ENCODE measurements at regions of chr19 and their contacts with region 1.

Region 1: GRCh38 chr19:13212759-13213330 is 62.6 kb downstream of the IER2 start:
- DNase-seq: peak; percentile 62 to 73 (median 66)
- H3K4me3 ChIP-seq: no peak overlapping the region
- H3K4me3 Mint-ChIP-seq: peak overlapping the region in 3 of 8 donors; percentile 43 to 79 (median 44)
- H3K27ac ChIP-seq: no peak overlapping the region
- H3K27ac Mint-ChIP-seq: peak overlapping the region in 5 of 7 donors; percentile 4 to 75 (median 25)
- H3K4me1 ChIP-seq: peaks cover 14% of the 10 kb centered on the region
- H3K4me1 Mint-ChIP-seq: peaks cover 17 to 50% (median 29%) of the 10 kb centered on the region in 4 donors
- H3K27me3 ChIP-seq: no peaks in the 10 kb centered on the region
- H3K27me3 Mint-ChIP-seq: no peaks in the 10 kb centered on the region

Region 2: DNA sequence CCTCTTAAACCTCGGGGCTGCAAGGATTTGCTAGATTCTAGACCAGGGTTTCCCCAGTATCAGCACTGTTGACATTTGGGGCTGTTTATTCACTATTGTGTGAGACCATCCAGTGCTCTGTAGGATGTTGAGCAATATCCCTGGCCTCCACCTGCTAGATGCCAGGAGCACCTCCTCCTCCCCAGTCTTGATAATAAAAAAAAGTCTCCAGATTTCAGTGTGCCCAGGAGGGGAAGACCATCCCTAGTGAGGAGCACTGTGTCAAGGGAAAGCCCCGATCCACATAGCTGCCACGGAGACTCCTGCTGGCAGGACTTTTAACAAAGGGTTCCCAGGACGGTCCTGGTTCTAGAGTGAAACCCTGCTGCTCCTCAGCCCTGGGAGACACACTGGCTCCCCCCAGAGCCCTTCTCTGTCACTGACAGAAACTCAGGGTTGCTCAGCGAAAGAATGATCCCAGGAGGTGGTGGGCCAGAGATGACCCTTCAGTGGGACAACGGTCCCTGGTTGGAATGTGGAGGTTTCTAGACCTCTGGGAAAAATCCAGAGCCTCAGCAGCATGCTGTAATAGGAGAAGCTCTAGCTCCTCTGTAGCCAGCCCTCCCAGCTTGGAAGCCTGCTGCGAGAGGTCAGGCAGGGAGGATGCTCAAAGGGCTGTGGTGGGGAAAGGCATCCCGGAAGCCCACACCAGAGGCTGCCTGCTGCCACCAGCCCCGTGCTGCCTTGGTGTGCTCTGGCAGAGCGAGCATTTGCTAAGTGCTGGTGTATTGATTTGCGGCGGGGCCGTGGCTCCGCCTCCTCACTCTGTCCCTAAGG is 130.4 kb before region 1 on chr19:
- CTCF ChIA-PET with region 1: no interaction called
- POLR2A ChIA-PET with region 1: no interaction called
- intact Hi-C with region 1: no loop called
- DNase-seq: no peak
- H3K4me3 ChIP-seq: no peak overlapping the region
- H3K4me3 Mint-ChIP-seq: no peak overlapping the region
- H3K27ac ChIP-seq: no peak overlapping the region
- H3K27ac Mint-ChIP-seq: no peak overlapping the region
- H3K4me1 ChIP-seq: peaks cover 8% of the 10 kb centered on the region
- H3K4me1 Mint-ChIP-seq: peaks cover 0 to 9% (median 5%) of the 10 kb centered on the region in 4 donors
- H3K27me3 ChIP-seq: no peaks in the 10 kb centered on the region
- H3K27me3 Mint-ChIP-seq: peaks cover 0 to 3% of the 10 kb centered on the region in 2 donors

Region 3: DNA sequence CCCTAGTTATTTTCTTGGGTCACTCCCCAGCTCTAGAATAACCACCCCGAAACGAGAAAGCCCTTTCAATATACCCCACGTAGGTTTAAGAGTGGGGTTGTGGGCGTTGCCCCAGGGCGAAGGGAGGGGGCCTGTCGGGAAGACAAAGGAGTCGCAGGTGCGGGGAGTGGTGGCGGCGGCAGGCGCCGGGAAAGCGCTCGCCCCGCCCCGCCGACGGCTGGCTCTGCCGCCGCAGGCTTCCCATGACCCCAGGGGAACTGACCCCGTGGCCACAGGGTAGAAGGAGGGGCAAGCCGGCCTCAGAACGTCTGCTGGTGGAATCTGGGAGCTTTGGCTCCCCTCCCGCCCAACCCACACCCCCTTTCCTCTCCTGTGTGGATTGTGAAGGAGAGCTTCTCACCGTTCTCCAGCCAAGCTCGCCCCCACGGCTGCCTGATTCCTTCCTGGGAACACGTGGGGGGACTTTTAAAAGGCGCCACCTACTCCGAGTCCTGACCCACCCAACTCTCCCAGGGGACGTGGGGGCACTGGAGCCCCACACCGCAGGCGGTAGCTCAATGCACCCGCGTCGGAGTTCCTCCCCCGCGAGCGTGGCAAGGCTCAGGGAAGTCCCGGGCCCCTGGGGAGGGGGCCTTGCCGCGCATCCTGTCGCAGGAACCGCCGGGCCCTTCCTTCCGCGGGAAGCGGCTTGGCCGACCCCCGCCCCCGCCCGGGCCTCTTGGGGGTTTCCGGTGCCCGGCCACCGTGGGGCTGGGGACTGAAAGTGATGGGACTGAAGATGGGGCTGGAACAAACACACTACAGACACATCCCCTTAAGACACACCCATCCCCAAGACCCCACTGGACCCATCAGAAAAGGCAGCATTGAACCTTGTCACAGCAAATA is 57.1 kb before region 1 on chr19:
- CTCF ChIA-PET with region 1: interaction called, 6 read pairs
- POLR2A ChIA-PET with region 1: interaction called, 17 read pairs
- intact Hi-C with region 1: loop called (anchors 1 kb)
- DNase-seq: peak; percentile 80 to 89 (median 83)
- H3K4me3 ChIP-seq: peak overlapping the region; percentile 98 to 100
- H3K4me3 Mint-ChIP-seq: peak overlapping the region; percentile 95 to 99 (median 99)
- H3K27ac ChIP-seq: peak overlapping the region; percentile 98
- H3K27ac Mint-ChIP-seq: peak overlapping the region; percentile 98 to 99 (median 99)
- H3K4me1 ChIP-seq: peaks cover 48% of the 10 kb centered on the region
- H3K4me1 Mint-ChIP-seq: peaks cover 27 to 77% (median 38%) of the 10 kb centered on the region in 4 donors
- H3K27me3 ChIP-seq: no peaks in the 10 kb centered on the region
- H3K27me3 Mint-ChIP-seq: peaks cover 0 to 3% of the 10 kb centered on the region in 2 donors

Region 4: DNA sequence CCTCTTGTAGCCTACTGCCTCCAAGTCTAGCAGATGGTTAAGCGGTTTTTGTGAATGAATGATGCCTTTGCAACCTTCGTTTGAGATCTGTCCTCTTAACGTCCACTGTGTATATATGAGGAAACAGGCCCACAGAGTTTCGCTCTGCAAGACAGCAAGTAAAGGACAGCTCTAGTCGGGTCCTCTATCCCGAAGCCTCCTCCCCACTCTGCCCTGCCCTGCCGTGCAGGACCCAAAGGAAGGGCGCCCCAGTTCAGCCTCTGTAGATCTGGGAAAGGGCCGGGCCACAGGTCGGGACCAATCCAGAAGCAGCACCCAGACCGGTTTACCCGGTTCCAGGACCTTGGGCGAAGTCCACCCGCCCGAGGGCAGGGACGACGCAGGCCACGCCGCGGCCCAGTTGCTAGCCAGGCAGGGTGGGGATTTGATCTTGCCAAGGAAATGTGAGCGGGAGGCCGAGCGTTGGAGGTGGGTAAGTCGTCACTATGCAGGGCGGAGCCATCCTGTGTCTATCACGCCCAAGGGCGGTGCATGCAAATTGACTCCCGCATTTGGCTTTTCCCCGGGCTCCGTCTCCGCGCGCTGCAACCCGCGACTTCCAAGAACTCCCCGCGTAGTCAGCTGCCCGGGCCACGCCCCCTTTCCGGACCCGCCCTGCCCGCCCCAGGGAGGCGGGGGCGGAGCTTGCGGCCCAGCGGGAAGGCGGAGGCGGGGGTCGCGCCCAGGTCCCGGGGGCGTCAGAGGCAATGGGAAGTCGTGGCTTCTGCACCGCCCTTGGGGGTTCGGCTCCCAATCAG is 50.1 kb before region 1 on chr19:
- CTCF ChIA-PET with region 1: interaction called, 6 read pairs
- POLR2A ChIA-PET with region 1: interaction called, 13 read pairs
- intact Hi-C with region 1: no loop called
- DNase-seq: peak; percentile 69 to 89 (median 72)
- H3K4me3 ChIP-seq: peak overlapping the region; percentile 58 to 91
- H3K4me3 Mint-ChIP-seq: peak overlapping the region; percentile 83 to 91 (median 88)
- H3K27ac ChIP-seq: peak overlapping the region; percentile 82
- H3K27ac Mint-ChIP-seq: peak overlapping the region; percentile 94 to 99 (median 97)
- H3K4me1 ChIP-seq: peaks cover 96% of the 10 kb centered on the region
- H3K4me1 Mint-ChIP-seq: peaks cover 42 to 85% (median 63%) of the 10 kb centered on the region in 4 donors
- H3K27me3 ChIP-seq: no peaks in the 10 kb centered on the region
- H3K27me3 Mint-ChIP-seq: no peaks in the 10 kb centered on the region

Region 5: GRCh38 chr19:13234518-13234917 is 21.7 kb after region 1 on chr19:
- CTCF ChIA-PET with region 1: interaction called, 4 read pairs
- POLR2A ChIA-PET with region 1: no interaction called
- intact Hi-C with region 1: loop called (anchors 1 kb)
- DNase-seq: peak; percentile 41 to 66 (median 56)
- H3K4me3 ChIP-seq: no peak overlapping the region
- H3K4me3 Mint-ChIP-seq: peak overlapping the region; percentile 7 to 82 (median 46)
- H3K27ac ChIP-seq: no peak overlapping the region
- H3K27ac Mint-ChIP-seq: peak overlapping the region in 2 of 7 donors; percentile 60 to 87
- H3K4me1 ChIP-seq: peaks cover 13% of the 10 kb centered on the region
- H3K4me1 Mint-ChIP-seq: peaks cover 7 to 13% (median 13%) of the 10 kb centered on the region in 4 donors
- H3K27me3 ChIP-seq: no peaks in the 10 kb centered on the region
- H3K27me3 Mint-ChIP-seq: peaks cover 2 to 3% of the 10 kb centered on the region in 2 donors

Region 6: GRCh38 chr19:13262450-13262849 is 49.6 kb after region 1 on chr19:
- CTCF ChIA-PET with region 1: interaction called, 12 read pairs
- POLR2A ChIA-PET with region 1: no interaction called
- intact Hi-C with region 1: loop called (anchors 5 kb)
- DNase-seq: peak in 4 of 5 donors; percentile 45 to 56 (median 51)
- H3K4me3 ChIP-seq: no peak overlapping the region
- H3K4me3 Mint-ChIP-seq: no peak overlapping the region
- H3K27ac ChIP-seq: no peak overlapping the region
- H3K27ac Mint-ChIP-seq: peak overlapping the region in 3 of 7 donors; percentile 35 to 59 (median 43)
- H3K4me1 ChIP-seq: no peaks in the 10 kb centered on the region
- H3K4me1 Mint-ChIP-seq: peaks cover 2 to 4% (median 3%) of the 10 kb centered on the region in 4 donors
- H3K27me3 ChIP-seq: no peaks in the 10 kb centered on the region
- H3K27me3 Mint-ChIP-seq: peaks cover 7 to 18% of the 10 kb centered on the region in 2 donors